ENCODE measurements at regions of chr6 and their contacts with region 1.

Region 1: DNA sequence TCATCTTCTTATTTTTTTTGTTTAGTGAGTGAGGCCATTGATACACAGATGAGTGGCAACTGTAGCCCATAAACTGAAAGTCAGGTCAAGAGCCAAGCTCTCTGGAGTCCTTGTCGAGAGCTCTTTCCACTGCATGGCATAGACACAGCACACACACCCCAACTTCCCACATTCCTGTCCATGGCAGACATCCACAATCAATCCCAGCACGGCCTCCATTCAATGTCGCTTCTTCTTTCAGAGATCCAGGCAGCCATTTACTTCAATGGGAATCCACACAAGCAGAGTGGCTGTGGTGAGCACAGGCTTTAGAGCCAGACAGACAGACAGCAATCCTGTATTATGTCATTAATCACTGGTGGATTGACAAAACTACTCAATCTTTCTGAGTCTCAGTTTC is 34.9 kb upstream of the ECI2 start:
- DNase-seq: no peak
- ATAC-seq: no peak

Region 2: GRCh38 chr6:4786936-4787504 is 616.7 kb after region 1 on chr6:
- intact Hi-C with region 1: loop called (anchors 2 kb)
- DNase-seq: no peak
- ATAC-seq: no peak

Measured in sciatic nerve (tissue), 2 donors.